ENCODE measurements at regions of chr1 and their contacts with region 1.

Region 1: GRCh38 chr1:94335950-94336349 is 82.2 kb upstream of the ABCD3 start:
- DNase-seq: peak in 4 of 9 donors; percentile 3 to 34 (median 14)
- ATAC-seq: peak; percentile 49
- H3K4me3 ChIP-seq: no peak overlapping the region
- H3K4me3 Mint-ChIP-seq: no peak overlapping the region
- H3K27ac ChIP-seq: no peak overlapping the region
- H3K27ac Mint-ChIP-seq: no peak overlapping the region
- H3K4me1 ChIP-seq: no peaks in the 10 kb centered on the region
- H3K4me1 Mint-ChIP-seq: peaks cover 0 to 3% (median 0%) of the 10 kb centered on the region in 7 donors
- H3K27me3 ChIP-seq: no peaks in the 10 kb centered on the region
- H3K27me3 Mint-ChIP-seq: peaks cover 4 to 21% (median 10%) of the 10 kb centered on the region in 5 donors

Region 2: GRCh38 chr1:94045465-94046056 is 290.4 kb before region 1 on chr1:
- CTCF ChIA-PET with region 1: interaction called, 7 read pairs
- POLR2A ChIA-PET with region 1: no interaction called
- intact Hi-C with region 1: loop called (anchors 5 kb)
- DNase-seq: peak in 6 of 9 donors; percentile 14 to 39 (median 20)
- ATAC-seq: peak; percentile 56
- H3K4me3 ChIP-seq: no peak overlapping the region
- H3K4me3 Mint-ChIP-seq: peak overlapping the region in 9 of 10 donors; percentile 25 to 77 (median 68)
- H3K27ac ChIP-seq: no peak overlapping the region
- H3K27ac Mint-ChIP-seq: no peak overlapping the region
- H3K4me1 ChIP-seq: no peaks in the 10 kb centered on the region
- H3K4me1 Mint-ChIP-seq: peaks cover 0 to 10% (median 5%) of the 10 kb centered on the region in 7 donors
- H3K27me3 ChIP-seq: no peaks in the 10 kb centered on the region
- H3K27me3 Mint-ChIP-seq: peaks cover 0 to 28% (median 24%) of the 10 kb centered on the region in 5 donors

Region 3: DNA sequence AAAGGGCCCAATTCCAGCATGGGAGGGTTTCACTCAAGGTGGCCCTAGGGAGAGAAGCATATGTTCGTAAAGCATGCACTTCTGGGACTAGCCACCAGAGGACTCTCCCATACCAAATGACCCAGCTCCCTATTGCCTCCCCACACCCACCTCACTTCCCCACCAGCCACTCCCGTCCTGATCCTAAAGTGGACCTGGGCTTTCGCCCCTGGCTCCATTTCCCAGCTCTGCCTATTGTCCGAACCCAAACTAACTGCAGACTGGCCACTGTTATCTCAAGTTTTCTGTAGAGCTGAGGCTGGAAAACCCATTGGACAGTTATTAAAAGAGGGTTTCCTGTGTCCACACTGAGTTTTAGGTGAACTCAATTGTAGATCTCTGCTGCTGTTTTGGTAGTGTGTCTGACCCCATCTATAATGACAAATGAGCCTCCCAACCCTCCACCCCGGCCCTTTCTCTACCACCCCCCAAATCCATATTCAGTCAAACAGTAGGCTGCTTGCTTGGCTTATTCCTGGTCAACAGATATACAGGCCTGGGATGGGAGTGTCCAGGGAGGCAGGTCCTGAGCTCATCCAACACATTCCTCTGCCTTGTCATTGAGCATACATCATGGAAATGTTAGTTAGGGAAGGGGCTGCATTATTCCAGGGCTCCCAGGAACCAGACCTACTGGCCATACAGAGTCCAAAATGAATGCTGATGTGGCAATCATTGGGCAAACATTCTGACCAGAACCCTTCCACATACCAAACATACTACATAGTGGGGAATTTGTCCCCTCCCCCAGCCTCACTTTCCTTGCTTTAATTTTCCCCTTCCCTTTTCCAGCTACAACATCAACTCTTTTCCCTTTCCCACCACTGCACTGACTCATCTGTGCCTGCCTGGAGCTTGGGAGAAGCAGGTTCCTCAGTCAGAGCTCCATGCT is 274.2 kb before region 1 on chr1:
- CTCF ChIA-PET with region 1: no interaction called
- POLR2A ChIA-PET with region 1: no interaction called
- intact Hi-C with region 1: loop called (anchors 1 to 5 kb)
- DNase-seq: peak in 5 of 9 donors; percentile 11 to 31 (median 17)
- ATAC-seq: peak; percentile 78
- H3K4me3 ChIP-seq: no peak overlapping the region
- H3K4me3 Mint-ChIP-seq: no peak overlapping the region
- H3K27ac ChIP-seq: no peak overlapping the region
- H3K27ac Mint-ChIP-seq: no peak overlapping the region
- H3K4me1 ChIP-seq: no peaks in the 10 kb centered on the region
- H3K4me1 Mint-ChIP-seq: peaks cover 0 to 2% (median 0%) of the 10 kb centered on the region in 7 donors
- H3K27me3 ChIP-seq: no peaks in the 10 kb centered on the region
- H3K27me3 Mint-ChIP-seq: peaks cover 7 to 25% (median 14%) of the 10 kb centered on the region in 5 donors